ENCODE measurements at regions of chrX and their contacts with region 1.

Region 1: DNA sequence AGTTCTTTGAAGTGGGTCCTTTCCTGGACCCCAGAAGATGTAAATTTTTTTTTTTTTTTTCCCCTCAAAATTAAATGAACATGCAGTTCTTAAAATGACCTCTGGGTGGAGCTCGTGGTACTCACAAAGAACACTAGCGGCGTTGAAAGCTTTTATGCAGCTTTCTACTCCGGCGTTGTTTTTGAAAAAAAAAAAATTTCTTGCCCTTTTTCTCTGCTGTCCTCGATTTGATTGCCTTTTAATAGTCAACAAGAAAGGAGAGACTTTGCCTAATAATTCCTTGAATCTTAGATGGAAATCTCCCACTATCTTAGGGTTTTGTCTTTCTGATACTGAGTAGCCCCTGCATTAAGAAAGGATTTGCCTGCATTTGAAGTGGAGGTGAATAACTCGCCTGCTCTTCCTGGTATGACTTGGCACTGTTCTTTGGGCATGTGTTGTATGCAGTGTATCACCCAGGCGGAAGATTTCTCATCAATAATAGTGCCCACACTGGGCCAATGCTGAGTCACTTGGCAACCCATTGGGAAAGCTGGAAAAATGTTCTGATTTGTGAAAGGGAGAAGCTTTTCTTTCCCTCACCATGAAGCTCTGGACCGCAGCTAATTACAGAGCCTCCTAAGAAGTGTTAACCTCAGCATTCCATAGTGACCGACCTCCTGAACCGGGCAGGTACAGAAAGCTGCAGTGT is 104.0 kb downstream of the PHEX start:
- DNase-seq: peak; percentile 83
- ATAC-seq: peak; percentile 70
- H3K4me3 ChIP-seq: peak overlapping the region; percentile 50; the same call in 1 of the 2 replicates
- H3K27ac ChIP-seq: peak overlapping the region; percentile 97
- H3K4me1 ChIP-seq: peaks cover 29% of the 10 kb centered on the region
- H3K27me3 ChIP-seq: no peaks in the 10 kb centered on the region
- CTCF ChIP-seq: peak; percentile 82

Region 2: GRCh38 chrX:22192417-22193060 is 56.4 kb after region 1 on chrX:
- CTCF ChIA-PET with region 1: interaction called, 8 read pairs
- POLR2A ChIA-PET with region 1: no interaction called
- intact Hi-C with region 1: loop called (anchors 2 kb)
- DNase-seq: peak; percentile 78
- ATAC-seq: peak; percentile 90
- H3K4me3 ChIP-seq: no peak overlapping the region
- H3K27ac ChIP-seq: no peak overlapping the region
- H3K4me1 ChIP-seq: 0 out of 2 replicates have a peak, but pooled peaks cover 3% of the 10 kb centered on the region
- H3K27me3 ChIP-seq: no peaks in the 10 kb centered on the region
- CTCF ChIP-seq: peak; percentile 80

Region 3: GRCh38 chrX:22365460-22365859 is 229.3 kb after region 1 on chrX:
- CTCF ChIA-PET with region 1: no interaction called
- POLR2A ChIA-PET with region 1: no interaction called
- intact Hi-C with region 1: loop called (anchors 10 kb)
- DNase-seq: peak; percentile 98
- ATAC-seq: peak; percentile 90
- H3K4me3 ChIP-seq: no peak overlapping the region
- H3K27ac ChIP-seq: peak overlapping the region; percentile 73
- H3K4me1 ChIP-seq: peaks cover 20% of the 10 kb centered on the region
- H3K27me3 ChIP-seq: no peaks in the 10 kb centered on the region
- CTCF ChIP-seq: no peak

Region 4: GRCh38 chrX:22378296-22378695 is 242.2 kb after region 1 on chrX:
- CTCF ChIA-PET with region 1: no interaction called
- POLR2A ChIA-PET with region 1: no interaction called
- intact Hi-C with region 1: no loop called
- DNase-seq: peak; percentile 34
- ATAC-seq: no peak
- H3K4me3 ChIP-seq: no peak overlapping the region
- H3K27ac ChIP-seq: no peak overlapping the region
- H3K4me1 ChIP-seq: peaks cover 38% of the 10 kb centered on the region
- H3K27me3 ChIP-seq: no peaks in the 10 kb centered on the region
- CTCF ChIP-seq: no peak

Region 5: DNA sequence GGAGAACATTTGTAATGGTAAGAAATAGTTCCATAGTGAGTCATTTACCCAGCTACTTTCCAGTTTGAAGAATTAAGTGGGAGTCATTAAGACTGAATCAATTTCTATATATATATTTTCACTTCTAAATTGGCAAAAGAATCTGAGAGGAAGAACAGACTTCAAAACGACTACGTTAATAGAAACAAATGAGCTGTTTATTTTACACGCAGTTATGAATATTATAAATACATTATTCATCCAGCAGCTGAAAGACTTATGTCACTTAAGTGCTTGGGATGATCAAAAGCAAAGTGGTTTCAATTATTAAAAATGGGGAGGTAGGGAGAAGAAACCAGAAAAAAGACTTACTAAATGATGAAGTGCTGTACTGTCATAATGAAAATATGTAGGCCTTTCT is 603.1 kb after region 1 on chrX:
- CTCF ChIA-PET with region 1: no interaction called
- POLR2A ChIA-PET with region 1: interaction called, 24 read pairs
- intact Hi-C with region 1: no loop called
- DNase-seq: no peak
- ATAC-seq: no peak
- H3K4me3 ChIP-seq: no peak overlapping the region
- H3K27ac ChIP-seq: no peak overlapping the region
- H3K4me1 ChIP-seq: no peaks in the 10 kb centered on the region; the same call in 1 of the 2 replicates
- H3K27me3 ChIP-seq: no peaks in the 10 kb centered on the region
- CTCF ChIP-seq: no peak

Region 6: GRCh38 chrX:23554304-23554703 is 1418.2 kb after region 1 on chrX:
- CTCF ChIA-PET with region 1: no interaction called
- POLR2A ChIA-PET with region 1: interaction called, 4 read pairs
- intact Hi-C with region 1: loop called (anchors 5 kb)
- DNase-seq: peak; percentile 68
- ATAC-seq: peak; percentile 37
- H3K4me3 ChIP-seq: no peak overlapping the region
- H3K27ac ChIP-seq: no peak overlapping the region
- H3K4me1 ChIP-seq: no peaks in the 10 kb centered on the region
- H3K27me3 ChIP-seq: peaks cover 41% of the 10 kb centered on the region; the same call in 1 of the 2 replicates
- CTCF ChIP-seq: peak; percentile 76

Measured in PC-3 (cell line).